Mucosa of descending colon (tissue), 3 donors: ENCODE measurements at regions of chr6 and their contacts with region 1.

Region 1: GRCh38 chr6:10510592-10511367 is 10.4 kb upstream of the GCNT2 start:
- DNase-seq: peak in 2 of 3 donors; percentile 77 to 78
- ATAC-seq: peak; percentile 99
- H3K4me3 ChIP-seq: no peak overlapping the region
- H3K4me1 ChIP-seq: peaks cover 4% of the 10 kb centered on the region
- CTCF ChIP-seq: peak; percentile 52

Region 2: DNA sequence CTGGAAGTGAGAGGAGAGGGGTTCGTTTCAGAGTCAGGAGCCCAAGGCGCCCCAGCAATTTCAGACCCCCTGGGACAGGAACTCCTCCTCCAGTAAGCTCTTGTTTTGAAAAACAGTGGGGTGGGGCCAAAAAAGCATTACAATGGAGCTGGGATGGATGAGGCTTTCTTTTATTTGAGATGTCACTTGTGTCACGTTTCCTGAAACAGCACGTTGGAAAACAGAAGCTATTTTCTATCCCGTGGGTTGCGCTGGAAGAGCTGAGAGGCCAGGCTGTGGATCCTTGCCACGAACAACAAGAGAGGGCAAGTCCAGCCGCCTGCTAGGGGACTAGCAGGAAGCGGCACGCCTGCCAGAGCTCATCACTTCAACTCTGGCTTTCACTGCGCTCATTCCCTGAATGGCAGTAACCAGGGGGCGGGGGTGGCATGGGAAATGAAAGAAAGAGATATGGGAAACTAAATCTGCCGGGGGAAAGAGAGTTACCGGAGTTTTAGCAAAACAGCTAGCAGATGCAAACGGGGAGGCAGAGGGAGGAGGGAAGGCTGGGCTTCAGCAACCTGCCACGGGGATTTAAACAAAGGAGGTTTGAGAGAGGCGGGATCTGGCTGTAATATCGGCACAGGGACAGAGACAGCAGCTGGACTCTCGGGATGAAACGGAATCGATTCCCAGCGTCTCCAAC is 45.0 kb after region 1 on chr6:
- intact Hi-C with region 1: no loop called
- DNase-seq: peak; percentile 56 to 64 (median 60)
- ATAC-seq: peak; percentile 67
- H3K4me3 ChIP-seq: no peak overlapping the region
- H3K4me1 ChIP-seq: peaks cover 4% of the 10 kb centered on the region
- CTCF ChIP-seq: no peak

Region 3: GRCh38 chr6:10694302-10695085 is 183.7 kb after region 1 on chr6 and contains the starts of genes C6orf52 and PAK1IP1:
- intact Hi-C with region 1: loop called (anchors 5 to 10 kb)
- DNase-seq: peak; percentile 92 to 96 (median 95)
- ATAC-seq: peak; percentile 99
- H3K4me3 ChIP-seq: peak within 1 kb of the TSS; percentile 73
- H3K4me1 ChIP-seq: peaks cover 16% of the 10 kb centered on the region
- CTCF ChIP-seq: no peak
- total RNA-seq, gene C6orf52: 1.2 to 1.7 TPM in 2 of 3 donors, not detected in the other
- total RNA-seq, gene PAK1IP1: 5.8 to 12.5 (median 9.8) TPM